Right cardiac atrium (tissue), 5 donors: ENCODE measurements at regions of chr4 and their contacts with region 1.

Region 1: DNA sequence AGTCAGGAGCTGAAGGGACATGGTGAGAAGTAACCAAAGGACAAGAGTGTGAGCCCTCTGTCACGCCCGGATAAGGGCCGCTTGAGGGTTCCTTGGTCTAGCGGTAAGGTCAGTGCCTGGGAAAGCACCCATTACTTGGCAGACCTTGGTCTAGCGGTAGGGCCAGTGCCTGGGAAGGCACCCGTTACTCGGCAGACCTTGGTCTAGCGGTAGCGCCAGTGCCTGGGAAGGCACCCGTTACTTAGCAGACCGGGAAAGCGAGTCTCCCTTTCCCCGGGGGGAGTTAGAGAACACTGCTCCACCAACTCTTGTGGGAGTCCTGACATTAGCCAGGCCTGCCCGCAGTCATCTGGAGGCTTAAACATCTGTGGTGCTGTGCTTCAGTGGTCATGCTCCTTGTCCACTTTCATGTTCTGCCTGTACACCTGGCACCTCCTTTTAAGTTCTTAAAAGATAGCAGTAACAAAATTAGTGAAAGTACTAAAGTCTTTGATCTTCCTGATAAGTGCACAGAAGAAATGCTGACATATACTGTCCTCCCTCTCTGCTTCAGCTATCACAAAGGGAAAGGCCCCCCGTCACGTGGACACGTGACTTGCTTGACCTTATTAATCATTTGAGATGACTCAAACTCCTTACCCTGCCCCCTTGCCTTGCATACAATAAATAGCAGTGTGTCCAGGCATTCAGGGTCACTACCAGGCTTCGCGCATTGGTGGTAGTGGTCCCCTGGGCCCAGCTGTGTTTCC is 9.3 kb upstream of the SEC24B start:
- DNase-seq: no peak
- ATAC-seq: no peak
- H3K4me3 ChIP-seq: no peak overlapping the region
- H3K27ac ChIP-seq: no peak overlapping the region
- H3K4me1 ChIP-seq: no peaks in the 10 kb centered on the region
- H3K27me3 ChIP-seq: no peaks in the 10 kb centered on the region

Region 2: GRCh38 chr4:108783665-108784463 is 640.4 kb before region 1 on chr4:
- intact Hi-C with region 1: no loop called
- DNase-seq: no peak
- ATAC-seq: no peak
- H3K4me3 ChIP-seq: no peak overlapping the region
- H3K27ac ChIP-seq: no peak overlapping the region
- H3K4me1 ChIP-seq: peaks cover 1% of the 10 kb centered on the region
- H3K27me3 ChIP-seq: no peaks in the 10 kb centered on the region

Region 3: DNA sequence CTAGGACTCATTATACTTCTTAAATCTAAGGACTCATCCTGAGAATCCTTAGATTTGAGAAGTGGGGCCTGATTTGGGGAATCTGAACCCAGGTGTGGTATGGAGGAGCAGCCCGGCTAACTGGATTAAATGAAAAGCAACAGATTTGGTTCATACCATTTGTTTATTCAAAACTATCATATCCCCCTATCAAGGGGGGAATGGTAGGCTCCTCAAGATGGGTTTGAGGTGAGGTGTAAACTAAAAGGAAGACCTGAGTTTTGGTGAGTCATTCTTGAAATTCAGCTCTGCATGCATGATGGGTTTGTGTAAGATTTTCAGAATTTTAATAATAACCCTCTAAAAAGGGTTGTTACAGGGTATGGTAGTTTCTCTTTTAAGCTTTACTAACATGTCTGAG is 225.6 kb after region 1 on chr4:
- intact Hi-C with region 1: loop called in 3 of 4 experiments (anchors 5 to 10 kb)
- DNase-seq: no peak
- ATAC-seq: no peak
- H3K4me3 ChIP-seq: no peak overlapping the region
- H3K27ac ChIP-seq: no peak overlapping the region
- H3K4me1 ChIP-seq: peaks cover 3% of the 10 kb centered on the region
- H3K27me3 ChIP-seq: no peaks in the 10 kb centered on the region

Region 4: DNA sequence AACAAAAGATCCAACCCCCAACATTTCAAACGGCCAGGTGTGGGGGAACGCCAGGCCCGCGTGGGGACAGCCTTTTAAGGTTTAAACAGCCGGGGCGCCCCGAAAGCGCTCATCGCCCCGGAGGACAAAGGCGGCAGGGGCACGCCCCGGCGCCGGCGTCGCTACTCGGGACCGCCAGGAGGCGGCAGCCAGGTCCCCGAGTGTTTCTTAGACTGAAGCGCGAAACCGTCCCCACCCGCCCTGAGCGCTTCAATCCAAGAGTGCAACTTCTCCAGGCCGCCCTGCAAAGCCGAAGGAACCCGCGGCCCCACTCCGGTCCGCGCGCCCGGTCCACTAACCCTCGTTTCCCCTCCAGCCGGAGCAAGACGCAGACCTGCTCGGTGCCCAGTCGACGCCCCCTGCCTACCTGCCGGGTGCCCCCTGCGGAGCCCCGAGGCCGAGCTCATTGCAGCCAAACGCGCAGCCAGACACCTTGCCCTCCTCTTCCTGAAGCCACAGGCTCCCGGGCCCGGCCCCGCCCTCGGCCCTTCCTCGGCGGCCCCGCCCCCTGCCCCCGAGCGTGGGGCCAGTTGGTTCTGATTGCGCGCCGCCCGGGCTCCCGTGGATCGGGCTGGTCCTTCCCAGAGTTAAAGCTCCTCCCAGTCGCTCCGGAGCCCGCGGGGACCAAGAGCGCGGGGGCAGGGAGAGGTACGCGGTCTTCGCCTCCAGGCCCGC is 278.8 kb after region 1 on chr4 and contains the start of gene CASP6:
- intact Hi-C with region 1: loop called in 1 of 4 experiments (anchors 10 kb)
- DNase-seq: peak; percentile 90 to 97 (median 95)
- ATAC-seq: peak; percentile 98
- H3K4me3 ChIP-seq: peak within 1 kb of the TSS; percentile 76
- H3K27ac ChIP-seq: peak within 1 kb of the TSS; percentile 73
- H3K4me1 ChIP-seq: peaks cover 6% of the 10 kb centered on the region
- H3K27me3 ChIP-seq: no peaks in the 10 kb centered on the region
- total RNA-seq, gene CASP6: 6.5 to 13.4 (median 8.7) TPM

Region 5: GRCh38 chr4:109815151-109816081 is 391.1 kb after region 1 on chr4 and contains the start of gene GAR1:
- intact Hi-C with region 1: loop called in 2 of 4 experiments (anchors 10 kb)
- DNase-seq: peak; percentile 92 to 96 (median 93)
- ATAC-seq: peak; percentile 99
- H3K4me3 ChIP-seq: peak within 1 kb of the TSS; percentile 83
- H3K27ac ChIP-seq: peak within 1 kb of the TSS; percentile 45
- H3K4me1 ChIP-seq: no peaks in the 10 kb centered on the region
- H3K27me3 ChIP-seq: no peaks in the 10 kb centered on the region
- total RNA-seq, gene GAR1: 6.5 to 10.1 (median 8.7) TPM

Region 6: DNA sequence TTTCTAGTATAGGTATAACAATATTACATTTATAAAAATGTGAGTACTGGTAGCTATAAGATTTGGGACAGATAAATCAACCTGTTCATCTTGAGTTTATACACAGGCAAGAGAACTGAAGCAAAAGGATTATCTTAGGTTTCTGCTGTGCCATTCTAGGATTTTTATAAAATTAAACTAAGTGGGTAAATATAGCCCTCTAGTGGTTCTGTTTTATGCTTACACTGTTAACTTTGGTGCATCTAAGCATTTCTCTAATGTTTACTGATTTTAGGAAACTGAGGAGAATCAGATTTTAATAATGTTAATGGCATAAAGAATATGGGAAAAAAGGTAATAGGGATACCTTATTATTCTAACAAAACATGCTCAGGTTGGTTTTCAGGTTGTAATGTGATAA is 402.5 kb after region 1 on chr4:
- intact Hi-C with region 1: loop called in 1 of 4 experiments (anchors 10 kb)
- DNase-seq: no peak
- ATAC-seq: no peak
- H3K4me3 ChIP-seq: no peak overlapping the region
- H3K27ac ChIP-seq: no peak overlapping the region
- H3K4me1 ChIP-seq: no peaks in the 10 kb centered on the region
- H3K27me3 ChIP-seq: no peaks in the 10 kb centered on the region

Region 7: DNA sequence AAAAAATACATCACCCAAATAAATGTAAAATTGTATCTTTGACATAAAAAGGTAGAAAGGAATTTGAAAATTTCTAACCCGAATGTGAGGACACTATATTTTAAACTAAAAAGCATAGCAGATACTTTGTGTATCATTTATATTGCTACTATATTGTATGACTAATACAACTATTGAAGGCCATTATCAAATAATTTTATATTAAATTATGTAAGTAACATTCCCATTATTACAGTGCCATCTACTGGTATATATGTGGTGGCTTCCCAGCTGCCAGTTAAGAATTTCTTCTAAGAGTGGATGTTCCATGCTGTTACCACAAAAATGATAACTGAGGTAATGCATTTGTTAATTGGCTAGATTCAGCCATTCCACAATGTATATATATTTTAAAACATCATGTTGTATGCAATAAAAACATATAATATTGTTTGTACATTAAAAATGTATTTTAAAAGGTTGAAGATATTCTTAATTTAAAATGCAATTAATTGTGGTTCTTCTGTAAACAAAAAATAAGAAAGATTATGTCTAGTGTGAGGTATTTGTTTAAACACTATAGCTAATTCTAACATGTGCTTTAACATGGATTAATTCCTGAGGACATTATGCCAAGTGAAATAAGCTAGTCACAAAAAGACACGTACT is 553.7 kb after region 1 on chr4:
- intact Hi-C with region 1: loop called (anchors 5 to 10 kb)
- DNase-seq: no peak
- ATAC-seq: peak in 1 of 2 donors; percentile 40
- H3K4me3 ChIP-seq: no peak overlapping the region
- H3K27ac ChIP-seq: no peak overlapping the region
- H3K4me1 ChIP-seq: no peaks in the 10 kb centered on the region
- H3K27me3 ChIP-seq: no peaks in the 10 kb centered on the region